Psoas muscle (tissue), 8 donors: ENCODE measurements at regions of chrX and their contacts with region 1.

Region 1: GRCh38 chrX:71466979-71467523 is 65.9 kb upstream of the OGT start:
- DNase-seq: no peak
- ATAC-seq: no peak
- H3K4me3 ChIP-seq: no peak overlapping the region
- H3K27ac ChIP-seq: no peak overlapping the region
- H3K4me1 ChIP-seq: no peaks in the 10 kb centered on the region
- H3K27me3 ChIP-seq: no peaks in the 10 kb centered on the region
- CTCF ChIP-seq: no peak

Region 2: GRCh38 chrX:71393919-71394318 is 73.1 kb before region 1 on chrX:
- intact Hi-C with region 1: loop called in 1 of 2 experiments (anchors 10 kb)
- DNase-seq: no peak
- ATAC-seq: no peak
- H3K4me3 ChIP-seq: no peak overlapping the region
- H3K27ac ChIP-seq: no peak overlapping the region
- H3K4me1 ChIP-seq: no peaks in the 10 kb centered on the region
- H3K27me3 ChIP-seq: no peaks in the 10 kb centered on the region
- CTCF ChIP-seq: no peak